ENCODE measurements at regions of chr9 and their contacts with region 1.

Region 1: GRCh38 chr9:89602978-89603766 is 1.6 kb upstream of the GADD45G start:
- DNase-seq: peak; percentile 7
- H3K4me3 ChIP-seq: no peak overlapping the region
- CTCF ChIP-seq: peak; percentile 84

Region 2: GRCh38 chr9:90095682-90096081 is 492.5 kb after region 1 on chr9:
- CTCF ChIA-PET with region 1: interaction called, 265 read pairs
- POLR2A ChIA-PET with region 1: no interaction called
- DNase-seq: no peak
- H3K4me3 ChIP-seq: no peak overlapping the region
- CTCF ChIP-seq: no peak

Region 3: DNA sequence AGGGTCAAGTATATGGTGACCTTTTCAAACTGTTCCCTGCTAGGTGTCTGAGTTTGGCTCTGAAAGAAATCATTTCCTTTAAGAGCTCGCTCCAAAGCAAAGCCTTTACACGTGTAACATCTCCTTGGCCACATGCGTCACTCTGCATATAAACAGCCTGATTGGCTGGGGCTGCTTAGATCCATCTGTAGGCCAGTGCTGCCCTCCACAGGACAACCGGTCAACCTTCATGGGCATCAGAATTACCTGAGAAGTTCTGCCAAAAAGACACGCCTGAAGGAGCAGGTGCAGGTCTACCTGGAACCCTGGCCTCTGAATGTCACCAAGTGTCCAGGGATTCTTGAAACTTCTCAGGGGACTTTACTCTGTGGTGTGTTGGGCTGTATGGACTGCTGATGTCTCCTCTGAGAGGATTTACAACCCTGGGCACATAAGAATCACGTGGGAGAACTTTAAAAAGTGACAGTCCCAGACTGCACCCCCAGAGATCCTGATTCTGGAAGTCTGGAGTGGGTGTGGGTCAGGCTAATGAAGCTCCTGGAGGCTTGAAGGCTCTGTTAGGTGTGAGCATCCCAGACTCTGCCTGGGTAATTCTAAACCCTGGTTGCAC is 499.2 kb after region 1 on chr9:
- CTCF ChIA-PET with region 1: interaction called, 265 read pairs
- POLR2A ChIA-PET with region 1: no interaction called
- DNase-seq: peak; percentile 47
- H3K4me3 ChIP-seq: no peak overlapping the region
- CTCF ChIP-seq: peak; percentile 68

Measured in AG04449 (cell line).